ENCODE measurements at regions of chr15 and their contacts with region 1.

Region 1: DNA sequence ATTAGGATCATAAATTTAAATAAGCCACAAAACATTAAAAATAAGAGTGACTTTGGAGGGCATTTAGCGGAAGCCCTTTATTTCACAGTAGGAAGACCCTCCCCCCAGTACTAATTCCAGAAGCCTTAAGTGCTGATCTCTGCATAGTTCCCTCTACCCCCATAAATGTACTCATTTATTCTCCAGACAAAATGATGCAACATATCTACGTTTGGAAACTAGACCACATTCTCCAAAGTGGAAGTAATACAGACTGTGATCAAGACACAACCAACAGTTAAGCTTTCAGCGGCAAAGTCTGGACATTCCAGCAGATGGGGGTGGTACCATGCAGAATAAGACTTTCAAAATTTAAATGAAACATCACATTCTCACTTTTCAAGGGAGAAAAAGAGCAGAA is 44.8 kb upstream of the RPS17 start:
- DNase-seq: no peak
- H3K4me3 ChIP-seq: no peak overlapping the region
- H3K27ac ChIP-seq: no peak overlapping the region
- H3K4me1 ChIP-seq: no peaks in the 10 kb centered on the region
- H3K27me3 ChIP-seq: peaks cover 6% of the 10 kb centered on the region
- CTCF ChIP-seq: no peak
- EP300 ChIP-seq: no peak
- POLR2A ChIP-seq: no peak

Region 2: DNA sequence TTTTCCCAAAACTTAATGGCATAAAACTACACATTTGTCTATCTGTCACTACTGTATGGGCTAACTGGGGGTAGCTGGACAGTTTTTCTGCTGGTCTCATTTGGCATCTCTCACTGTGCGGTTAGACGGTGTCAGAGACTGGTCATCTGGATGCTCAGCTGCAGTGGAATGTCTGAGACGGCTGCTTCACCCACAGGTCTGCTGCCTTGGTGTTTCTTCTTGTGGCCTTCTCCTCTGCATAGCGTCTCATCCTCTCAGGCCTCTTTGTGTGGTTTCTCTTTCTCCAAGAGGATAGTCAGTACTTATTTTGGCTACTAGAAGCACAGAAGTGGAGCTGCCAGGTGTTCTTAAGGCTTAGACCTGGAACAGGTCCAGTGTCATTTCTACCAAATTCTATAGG is 191.4 kb before region 1 on chr15:
- in situ Hi-C with region 1: loop called in 1 of 4 experiments (anchors 25 kb)
- intact Hi-C with region 1: no loop called
- DNase-seq: no peak
- H3K4me3 ChIP-seq: no peak overlapping the region
- H3K27ac ChIP-seq: no peak overlapping the region
- H3K4me1 ChIP-seq: no peaks in the 10 kb centered on the region
- H3K27me3 ChIP-seq: no peaks in the 10 kb centered on the region
- CTCF ChIP-seq: no peak
- EP300 ChIP-seq: no peak
- POLR2A ChIP-seq: no peak